HepG2 (cell line): ENCODE measurements at regions of chr2 and their contacts with region 1.

Region 1: GRCh38 chr2:161134547-161135518 is 25.4 kb upstream of the TANK start:
- DNase-seq: peak; percentile 66
- ATAC-seq: peak; percentile 92
- H3K4me3 ChIP-seq: peak overlapping the region in 2 of 3 experiments; percentile 4 to 36; a peak in 3 of 6 replicates
- H3K27ac ChIP-seq: no peak overlapping the region
- H3K4me1 ChIP-seq: peaks cover 25% of the 10 kb centered on the region
- H3K27me3 ChIP-seq: no peaks in the 10 kb centered on the region
- CTCF ChIP-seq: no peak
- EP300 ChIP-seq: peak in 1 of 2 experiments; percentile 44; a peak in 1 of 4 replicates
- POLR2A ChIP-seq: no peak
- RAD21 ChIP-seq: no peak

Region 2: DNA sequence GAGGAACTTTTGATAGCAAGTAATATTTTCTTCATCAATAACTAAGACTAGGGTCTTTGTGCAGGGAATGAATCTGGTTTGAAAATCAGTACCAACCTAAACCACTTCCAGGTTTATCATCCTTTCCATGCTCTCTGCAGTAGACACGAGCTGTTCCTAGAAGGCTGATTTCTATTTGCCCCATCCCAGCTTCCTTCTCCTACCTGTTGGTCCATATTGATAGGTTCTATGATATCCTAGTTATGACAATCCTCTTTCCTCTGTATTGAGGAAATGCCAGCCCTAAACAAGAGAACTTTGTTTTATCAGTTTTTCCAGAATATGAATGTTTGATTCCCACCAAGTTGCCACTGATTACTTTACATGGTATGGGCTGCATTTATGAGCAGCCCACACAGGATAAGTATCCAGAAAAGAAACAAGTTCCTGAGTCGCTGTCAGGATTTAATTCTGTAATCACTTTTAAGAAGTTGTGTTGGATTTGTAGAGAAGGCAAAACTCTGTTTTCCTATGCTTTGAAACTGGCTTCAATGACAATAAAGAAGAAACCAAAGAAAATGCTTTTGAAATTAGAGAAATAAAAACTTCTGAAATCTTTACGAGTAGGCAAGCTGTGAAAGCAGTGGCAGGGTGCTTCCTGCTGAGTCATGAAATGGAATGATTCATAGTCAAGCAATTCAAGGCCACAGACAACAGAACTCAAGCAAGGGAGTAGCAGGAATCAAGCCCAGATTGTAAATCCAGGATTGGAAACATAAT is 11.9 kb before region 1 on chr2:
- CTCF ChIA-PET with region 1: no interaction called
- POLR2A ChIA-PET with region 1: no interaction called
- in situ Hi-C with region 1: no loop called
- intact Hi-C with region 1: loop called (anchors 1 kb)
- DNase-seq: peak; percentile 87
- ATAC-seq: peak; percentile 96
- H3K4me3 ChIP-seq: no peak overlapping the region
- H3K27ac ChIP-seq: peak overlapping the region; percentile 49
- H3K4me1 ChIP-seq: peaks cover 54% of the 10 kb centered on the region
- H3K27me3 ChIP-seq: no peaks in the 10 kb centered on the region
- CTCF ChIP-seq: no peak
- EP300 ChIP-seq: peak in 1 of 2 experiments; percentile 53; a peak in 1 of 4 replicates
- POLR2A ChIP-seq: no peak
- RAD21 ChIP-seq: no peak